Activated CD4-positive, alpha-beta memory T cell treated with anti-CD3 and anti-CD28 coated beads for 36 hours (primary cell): ENCODE measurements at regions of chr4 and their contacts with region 1.

Region 1: DNA sequence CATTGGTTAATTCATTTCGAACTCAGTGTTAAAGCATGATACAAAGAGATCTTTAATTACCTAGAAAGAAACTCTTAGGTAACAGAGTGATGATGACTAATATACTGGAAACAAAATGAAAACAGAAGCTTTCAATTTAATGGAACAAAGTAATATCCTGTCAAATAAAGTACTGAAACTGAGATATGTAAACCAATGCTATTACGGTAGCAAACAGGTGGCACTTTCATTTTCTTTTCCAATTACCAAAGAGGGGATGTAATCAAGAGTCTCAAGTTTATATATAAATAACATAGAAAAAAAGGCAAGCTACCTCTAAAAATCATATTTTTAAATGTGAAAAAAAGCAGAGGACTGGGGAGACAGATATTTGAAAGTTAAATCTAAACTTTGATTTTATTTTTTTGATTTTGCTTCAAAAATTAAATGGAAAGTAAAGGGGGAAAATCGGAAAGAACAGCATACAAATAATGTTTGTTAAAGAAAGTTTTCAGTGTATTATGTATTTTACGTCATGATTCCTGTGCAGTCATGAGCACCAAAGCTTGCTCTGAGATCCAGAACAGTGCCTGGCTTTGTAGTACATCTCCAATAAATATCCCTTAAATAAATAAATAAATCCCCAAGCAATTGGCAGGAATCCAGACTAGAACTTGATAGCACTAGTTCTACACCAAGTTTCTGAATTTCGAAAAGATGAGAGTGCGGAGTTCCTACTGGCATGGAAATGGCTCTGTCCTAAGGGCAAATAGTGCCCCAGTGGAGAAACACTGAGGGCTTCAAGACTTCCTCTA is 25.0 kb upstream of the RAPGEF2 start:
- DNase-seq: no peak
- H3K4me3 Mint-ChIP-seq: no peak overlapping the region
- H3K27ac Mint-ChIP-seq: no peak overlapping the region
- H3K4me1 Mint-ChIP-seq: peaks cover 22% of the 10 kb centered on the region
- H3K27me3 Mint-ChIP-seq: no peaks in the 10 kb centered on the region

Region 2: DNA sequence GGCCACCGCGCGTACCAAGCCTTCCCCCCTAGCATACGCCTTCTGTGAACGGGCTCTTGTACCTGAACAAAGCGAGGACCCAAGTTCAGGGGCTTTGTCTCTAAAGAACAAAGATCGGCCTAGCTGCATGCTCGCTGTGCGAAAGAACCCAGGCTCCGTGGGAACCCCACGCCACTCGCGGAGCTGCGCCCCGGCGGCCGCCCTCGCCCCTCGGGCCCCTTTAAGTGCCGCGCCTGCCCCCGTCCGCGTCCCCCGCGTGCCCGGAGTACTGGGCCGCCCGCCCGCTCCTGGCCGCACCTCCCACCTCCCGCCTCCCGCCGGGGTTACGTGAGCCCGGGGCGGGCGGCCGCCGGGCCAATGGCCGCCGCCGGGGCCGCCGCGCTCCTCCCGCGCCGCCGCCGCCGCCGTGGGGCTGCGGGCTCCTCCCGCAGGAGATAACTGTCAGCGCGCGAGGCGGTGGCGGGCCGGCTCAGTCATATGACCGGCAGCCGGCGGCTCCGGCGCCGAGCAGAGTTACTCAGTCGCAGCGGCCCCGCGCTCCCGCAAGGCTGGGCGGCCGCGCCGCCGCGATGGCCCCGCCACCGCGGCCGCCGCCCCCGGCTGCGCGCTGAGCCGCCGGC is 309.2 kb before region 1 on chr4 and contains the start of gene FNIP2:
- CTCF ChIA-PET with region 1: no interaction called
- POLR2A ChIA-PET with region 1: no interaction called
- intact Hi-C with region 1: loop called (anchors 5 kb)
- DNase-seq: peak; percentile 73
- H3K4me3 Mint-ChIP-seq: peak within 1 kb of the TSS; percentile 100
- H3K27ac Mint-ChIP-seq: peak within 1 kb of the TSS; percentile 91
- H3K4me1 Mint-ChIP-seq: peaks cover 43% of the 10 kb centered on the region
- H3K27me3 Mint-ChIP-seq: peaks cover 2% of the 10 kb centered on the region
- total RNA-seq, gene FNIP2: 17.7 to 19.4 TPM

Region 3: GRCh38 chr4:158870626-158871334 is 207.1 kb before region 1 on chr4:
- CTCF ChIA-PET with region 1: no interaction called
- POLR2A ChIA-PET with region 1: no interaction called
- intact Hi-C with region 1: no loop called
- DNase-seq: no peak
- H3K4me3 Mint-ChIP-seq: no peak overlapping the region
- H3K27ac Mint-ChIP-seq: no peak overlapping the region
- H3K4me1 Mint-ChIP-seq: peaks cover 6% of the 10 kb centered on the region
- H3K27me3 Mint-ChIP-seq: no peaks in the 10 kb centered on the region

Region 4: DNA sequence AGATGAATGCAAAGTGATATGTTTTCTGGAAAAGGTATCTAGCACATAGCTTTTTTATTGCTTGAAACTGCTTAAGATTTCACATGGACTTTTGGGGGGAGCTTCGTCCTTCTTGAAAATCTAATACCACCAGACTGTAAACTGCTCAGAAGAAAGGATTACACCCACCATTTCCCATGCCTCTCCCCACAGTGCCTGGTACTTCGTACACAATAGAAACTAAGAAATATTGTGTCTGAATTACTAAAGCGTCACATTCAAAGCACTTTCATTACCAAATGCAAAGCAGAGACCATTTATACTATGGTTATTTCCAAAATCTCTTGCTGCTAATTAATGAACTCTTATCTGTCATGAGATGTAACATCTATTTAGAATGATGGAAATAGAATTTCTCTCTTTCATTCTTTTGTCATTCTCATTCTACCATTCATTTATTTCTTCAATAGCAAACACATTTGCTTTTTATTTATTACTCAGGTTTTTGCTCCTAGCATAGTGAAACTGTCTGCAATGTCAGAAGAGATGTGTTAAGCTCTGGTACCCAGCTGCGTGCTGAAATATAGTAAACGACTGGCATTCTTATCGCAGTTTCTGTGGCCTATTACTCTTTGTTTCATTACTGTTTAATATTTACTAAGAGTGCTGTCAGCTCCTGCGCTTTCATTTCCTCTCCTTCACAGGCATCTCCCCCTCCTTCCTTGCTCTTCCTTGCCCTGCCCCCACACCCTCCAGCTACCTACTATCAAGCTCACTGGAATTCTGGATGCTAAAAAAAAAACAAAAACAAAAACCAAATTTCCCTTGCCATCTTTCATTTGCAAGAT is 26.4 kb before region 1 on chr4:
- CTCF ChIA-PET with region 1: interaction called, 3 read pairs
- POLR2A ChIA-PET with region 1: no interaction called
- intact Hi-C with region 1: loop called (anchors 2 kb)
- DNase-seq: no peak
- H3K4me3 Mint-ChIP-seq: no peak overlapping the region
- H3K27ac Mint-ChIP-seq: no peak overlapping the region
- H3K4me1 Mint-ChIP-seq: peaks cover 19% of the 10 kb centered on the region
- H3K27me3 Mint-ChIP-seq: peaks cover 13% of the 10 kb centered on the region

Region 5: GRCh38 chr4:159102622-159103383 is 24.9 kb after region 1 on chr4 and contains the start of gene RAPGEF2:
- CTCF ChIA-PET with region 1: interaction called, 5 read pairs
- POLR2A ChIA-PET with region 1: interaction called, 3 read pairs
- intact Hi-C with region 1: loop called (anchors 1 kb)
- DNase-seq: peak; percentile 91
- H3K4me3 Mint-ChIP-seq: peak within 1 kb of the TSS; percentile 79
- H3K27ac Mint-ChIP-seq: peak within 1 kb of the TSS; percentile 81
- H3K4me1 Mint-ChIP-seq: peaks cover 46% of the 10 kb centered on the region
- H3K27me3 Mint-ChIP-seq: peaks cover 5% of the 10 kb centered on the region
- total RNA-seq, gene RAPGEF2: 18.6 to 22.0 TPM